Panc1 (cell line): ENCODE measurements at regions of chr18 and their contacts with region 1.

Region 1: GRCh38 chr18:59605633-59606192 is 91.5 kb downstream of the CCBE1 start:
- DNase-seq: no peak
- ATAC-seq: no peak
- H3K4me3 ChIP-seq: no peak overlapping the region
- H3K27ac ChIP-seq: no peak overlapping the region
- H3K4me1 ChIP-seq: no peaks in the 10 kb centered on the region
- H3K27me3 ChIP-seq: no peaks in the 10 kb centered on the region
- CTCF ChIP-seq: no peak

Region 2: GRCh38 chr18:58998401-58999203 is 607.1 kb before region 1 on chr18:
- CTCF ChIA-PET with region 1: no interaction called
- POLR2A ChIA-PET with region 1: interaction called, 21 read pairs
- in situ Hi-C with region 1: no loop called
- intact Hi-C with region 1: no loop called
- DNase-seq: no peak
- ATAC-seq: no peak
- H3K4me3 ChIP-seq: no peak overlapping the region
- H3K27ac ChIP-seq: no peak overlapping the region; the same call in 1 of the 2 replicates
- H3K4me1 ChIP-seq: no peaks in the 10 kb centered on the region
- H3K27me3 ChIP-seq: no peaks in the 10 kb centered on the region
- CTCF ChIP-seq: no peak

Region 3: DNA sequence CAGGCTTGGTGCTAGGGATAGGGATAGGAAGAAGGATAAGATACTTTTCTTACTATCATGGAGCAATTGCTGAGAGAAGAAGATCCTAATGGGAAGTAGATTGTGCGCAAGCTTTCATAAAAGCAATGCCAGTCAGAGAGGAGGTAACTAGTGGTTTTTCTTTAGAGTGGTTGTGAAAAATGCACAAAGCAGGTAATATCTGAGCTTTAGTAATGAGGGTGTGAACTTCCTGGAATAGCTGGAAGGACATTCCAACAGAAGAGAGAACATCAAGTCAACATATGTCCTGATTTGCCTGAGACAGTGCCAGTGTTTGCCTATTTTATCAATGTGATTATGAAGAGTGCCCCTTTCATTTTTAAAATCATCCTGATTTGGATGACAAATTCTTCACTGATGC is 57.4 kb after region 1 on chr18:
- CTCF ChIA-PET with region 1: no interaction called
- POLR2A ChIA-PET with region 1: interaction called, 18 read pairs
- in situ Hi-C with region 1: no loop called
- intact Hi-C with region 1: no loop called
- DNase-seq: no peak
- ATAC-seq: no peak
- H3K4me3 ChIP-seq: no peak overlapping the region
- H3K27ac ChIP-seq: no peak overlapping the region
- H3K4me1 ChIP-seq: no peaks in the 10 kb centered on the region
- H3K27me3 ChIP-seq: no peaks in the 10 kb centered on the region; the same call in 1 of the 2 replicates
- CTCF ChIP-seq: no peak